HEK293 (cell line): ENCODE measurements at regions of chr14 and their contacts with region 1.

Region 1: GRCh38 chr14:51967521-51967920 is 21.8 kb upstream of the RTRAF start:
- H3K4me3 ChIP-seq: no peak overlapping the region
- H3K27ac ChIP-seq: no peak overlapping the region
- H3K4me1 ChIP-seq: no peaks in the 10 kb centered on the region
- CTCF ChIP-seq: no peak

Region 2: DNA sequence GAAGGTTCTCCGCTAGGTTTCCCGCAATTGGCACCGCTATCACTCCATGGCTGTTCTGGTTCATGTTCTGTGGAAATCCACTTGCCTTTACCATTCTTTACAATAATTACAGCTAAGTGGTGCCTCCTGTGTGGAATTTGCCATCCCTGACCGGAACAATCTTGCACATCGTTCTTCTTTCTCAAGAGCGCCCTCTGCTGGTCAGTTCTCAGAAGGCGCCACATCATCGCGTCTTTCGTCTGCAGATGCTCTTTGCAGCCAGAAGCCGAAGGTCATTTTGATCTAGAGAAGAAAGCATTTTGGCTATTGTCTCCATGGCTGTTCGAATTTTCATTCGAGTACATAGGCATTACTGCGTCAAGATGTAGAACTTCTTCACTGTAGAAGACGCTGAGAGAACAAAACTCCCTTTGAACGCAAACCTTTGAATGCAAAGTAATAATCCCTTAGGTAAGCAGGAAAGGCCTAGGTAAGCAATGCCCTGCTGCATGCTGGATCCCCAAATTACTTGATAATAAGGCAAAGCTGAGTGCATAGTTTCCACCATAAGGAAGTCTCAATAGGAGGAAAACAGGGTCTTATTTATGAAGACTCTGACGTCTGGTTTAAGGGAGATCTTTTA is 11.7 kb after region 1 on chr14:
- CTCF ChIA-PET with region 1: interaction called, 14 read pairs
- POLR2A ChIA-PET with region 1: no interaction called
- H3K4me3 ChIP-seq: no peak overlapping the region
- H3K27ac ChIP-seq: no peak overlapping the region
- H3K4me1 ChIP-seq: no peaks in the 10 kb centered on the region
- CTCF ChIP-seq: peak; percentile 29; the same call in 1 of the 2 replicates